ENCODE measurements at regions of chr5 and their contacts with region 1.

Region 1: DNA sequence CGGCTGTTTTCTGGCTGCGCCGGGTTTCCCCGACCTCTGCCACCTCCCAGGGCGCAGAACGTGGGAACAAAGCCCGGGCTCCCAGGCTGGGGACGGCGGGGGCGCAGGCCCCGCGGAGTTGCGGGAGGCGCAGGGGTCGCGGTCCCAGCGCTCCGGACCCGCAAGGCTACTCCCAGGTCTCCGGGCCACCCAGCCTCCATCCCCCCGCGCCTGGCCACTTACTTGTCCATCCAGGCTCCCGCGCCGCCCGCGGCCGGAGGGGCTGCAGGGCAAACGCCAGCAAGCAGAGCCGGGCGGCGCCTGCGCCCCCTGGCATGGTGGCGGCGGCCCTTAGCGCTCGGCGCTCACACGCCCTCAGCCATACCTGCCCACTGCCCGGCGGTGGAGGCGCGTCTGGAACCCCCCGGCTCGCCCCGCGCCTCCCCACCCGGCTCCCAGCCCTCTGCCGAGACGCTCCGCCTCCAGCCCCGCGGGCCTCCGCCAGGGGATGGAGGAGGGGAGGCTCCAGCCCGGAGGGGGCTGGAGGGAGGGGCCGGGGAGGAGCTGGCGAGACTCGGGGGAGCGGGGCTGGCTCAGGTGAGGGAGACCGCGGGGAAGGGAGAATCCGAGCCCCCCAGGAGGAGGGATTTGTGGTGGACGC is at the start of gene ADAM19:
- DNase-seq: peak; percentile 59 to 68
- ATAC-seq: peak; percentile 85 to 92 (median 90)
- H3K4me3 ChIP-seq: peak within 1 kb of the TSS; percentile 28 to 96 (median 89)
- H3K27ac ChIP-seq: peak within 1 kb of the TSS; percentile 74 to 95 (median 88)
- H3K4me1 ChIP-seq: peaks cover 3 to 57% (median 44%) of the 10 kb centered on the region in 9 donors
- H3K27me3 ChIP-seq: no peaks in the 10 kb centered on the region
- CTCF ChIP-seq: peak in 3 of 9 donors; percentile 26 to 33 (median 33)
- total RNA-seq, gene ADAM19: 5.5 to 49.6 (median 28.1) TPM

Region 2: GRCh38 chr5:157366741-157367674 is 208.5 kb before region 1 on chr5:
- intact Hi-C with region 1: no loop called
- DNase-seq: peak in 1 of 2 donors; percentile 28
- ATAC-seq: peak in 5 of 8 donors; percentile 47 to 63 (median 60)
- H3K4me3 ChIP-seq: no peak overlapping the region
- H3K27ac ChIP-seq: no peak overlapping the region
- H3K4me1 ChIP-seq: peaks cover 0 to 12% (median 5%) of the 10 kb centered on the region in 9 donors
- H3K27me3 ChIP-seq: no peaks in the 10 kb centered on the region
- CTCF ChIP-seq: peak in 7 of 9 donors; percentile 33 to 62 (median 51)

Region 3: GRCh38 chr5:157502143-157502647 is 73.3 kb before region 1 on chr5:
- intact Hi-C with region 1: loop called in 1 of 10 experiments (anchors 10 kb)
- DNase-seq: no peak
- ATAC-seq: peak in 3 of 8 donors; percentile 22 to 53 (median 53)
- H3K4me3 ChIP-seq: no peak overlapping the region
- H3K27ac ChIP-seq: peak overlapping the region in 1 of 10 donors; percentile 4
- H3K4me1 ChIP-seq: peaks cover 0 to 36% (median 9%) of the 10 kb centered on the region in 9 donors
- H3K27me3 ChIP-seq: no peaks in the 10 kb centered on the region
- CTCF ChIP-seq: no peak

Region 4: GRCh38 chr5:157511651-157512644 is 63.6 kb before region 1 on chr5:
- intact Hi-C with region 1: loop called in 2 of 10 experiments (anchors 10 kb)
- DNase-seq: peak; percentile 86 to 95
- ATAC-seq: peak; percentile 88 to 97 (median 94)
- H3K4me3 ChIP-seq: no peak overlapping the region
- H3K27ac ChIP-seq: peak overlapping the region in 9 of 10 donors; percentile 50 to 85 (median 76)
- H3K4me1 ChIP-seq: peaks cover 8 to 69% (median 51%) of the 10 kb centered on the region in 9 donors
- H3K27me3 ChIP-seq: no peaks in the 10 kb centered on the region
- CTCF ChIP-seq: no peak

Region 5: DNA sequence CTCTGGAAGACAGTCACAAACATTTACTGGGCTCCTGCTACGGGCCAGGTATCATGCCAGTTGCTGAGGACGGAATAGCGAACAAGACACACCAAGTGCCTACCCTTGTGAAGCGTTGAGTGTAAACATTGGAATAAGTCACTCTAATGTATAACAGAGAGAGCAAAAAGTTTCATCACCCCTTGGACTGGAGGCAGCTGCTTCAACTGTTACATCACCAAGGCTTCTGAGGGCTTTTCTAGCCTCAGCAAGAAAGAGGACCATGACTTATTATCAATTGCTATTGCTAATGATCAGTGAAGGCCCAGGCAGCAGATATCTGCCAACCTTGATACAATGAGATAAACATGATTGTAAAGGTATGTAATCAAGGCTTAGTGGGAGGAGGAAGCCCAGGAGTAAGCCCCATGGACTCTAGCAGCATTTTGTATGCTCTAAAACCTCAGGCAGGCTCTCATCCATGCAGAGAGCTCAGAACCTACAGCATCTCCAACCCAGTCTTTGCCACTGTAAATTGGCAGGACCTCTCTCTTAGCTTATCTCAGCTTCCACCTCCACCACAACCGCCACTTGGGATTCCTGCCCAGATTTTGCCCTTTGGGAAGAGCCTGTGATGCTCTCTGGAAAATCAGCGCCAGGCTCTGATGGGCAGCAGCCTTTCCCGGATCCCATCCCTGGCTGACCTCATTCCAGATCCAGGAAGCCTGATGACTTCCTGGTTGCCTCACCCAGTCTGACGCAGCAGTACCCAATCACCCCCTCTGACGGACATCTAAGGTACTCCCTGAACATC is 54.4 kb before region 1 on chr5:
- intact Hi-C with region 1: loop called in 2 of 10 experiments (anchors 5 to 10 kb)
- DNase-seq: peak; percentile 32 to 60
- ATAC-seq: peak; percentile 38 to 90 (median 64)
- H3K4me3 ChIP-seq: no peak overlapping the region
- H3K27ac ChIP-seq: peak overlapping the region in 8 of 10 donors; percentile 31 to 72 (median 53)
- H3K4me1 ChIP-seq: peaks cover 5 to 57% (median 30%) of the 10 kb centered on the region in 9 donors
- H3K27me3 ChIP-seq: no peaks in the 10 kb centered on the region
- CTCF ChIP-seq: peak in 3 of 9 donors; percentile 34 to 46 (median 38)

Measured in heart right ventricle (tissue), 16 donors.